CD8-positive, alpha-beta T cell (primary cell): ENCODE measurements at regions of chr1 and their contacts with region 1.

Region 1: GRCh38 chr1:2227346-2228153 is 569 bp upstream of the SKI start:
- DNase-seq: peak; percentile 88 to 97 (median 91)
- ATAC-seq: peak; percentile 70
- H3K4me3 ChIP-seq: peak overlapping the region in 1 of 2 experiments; percentile 24
- H3K4me3 Mint-ChIP-seq: peak overlapping the region; percentile 68
- H3K27ac ChIP-seq: peak overlapping the region in 1 of 2 experiments; percentile 66
- H3K27ac Mint-ChIP-seq: peak overlapping the region; percentile 74
- H3K4me1 ChIP-seq: peaks cover 24% of the 10 kb centered on the region
- H3K4me1 Mint-ChIP-seq: peaks cover 21% of the 10 kb centered on the region
- H3K27me3 ChIP-seq: no peaks in the 10 kb centered on the region
- H3K27me3 Mint-ChIP-seq: no peaks in the 10 kb centered on the region
- CTCF ChIP-seq: no peak

Region 2: DNA sequence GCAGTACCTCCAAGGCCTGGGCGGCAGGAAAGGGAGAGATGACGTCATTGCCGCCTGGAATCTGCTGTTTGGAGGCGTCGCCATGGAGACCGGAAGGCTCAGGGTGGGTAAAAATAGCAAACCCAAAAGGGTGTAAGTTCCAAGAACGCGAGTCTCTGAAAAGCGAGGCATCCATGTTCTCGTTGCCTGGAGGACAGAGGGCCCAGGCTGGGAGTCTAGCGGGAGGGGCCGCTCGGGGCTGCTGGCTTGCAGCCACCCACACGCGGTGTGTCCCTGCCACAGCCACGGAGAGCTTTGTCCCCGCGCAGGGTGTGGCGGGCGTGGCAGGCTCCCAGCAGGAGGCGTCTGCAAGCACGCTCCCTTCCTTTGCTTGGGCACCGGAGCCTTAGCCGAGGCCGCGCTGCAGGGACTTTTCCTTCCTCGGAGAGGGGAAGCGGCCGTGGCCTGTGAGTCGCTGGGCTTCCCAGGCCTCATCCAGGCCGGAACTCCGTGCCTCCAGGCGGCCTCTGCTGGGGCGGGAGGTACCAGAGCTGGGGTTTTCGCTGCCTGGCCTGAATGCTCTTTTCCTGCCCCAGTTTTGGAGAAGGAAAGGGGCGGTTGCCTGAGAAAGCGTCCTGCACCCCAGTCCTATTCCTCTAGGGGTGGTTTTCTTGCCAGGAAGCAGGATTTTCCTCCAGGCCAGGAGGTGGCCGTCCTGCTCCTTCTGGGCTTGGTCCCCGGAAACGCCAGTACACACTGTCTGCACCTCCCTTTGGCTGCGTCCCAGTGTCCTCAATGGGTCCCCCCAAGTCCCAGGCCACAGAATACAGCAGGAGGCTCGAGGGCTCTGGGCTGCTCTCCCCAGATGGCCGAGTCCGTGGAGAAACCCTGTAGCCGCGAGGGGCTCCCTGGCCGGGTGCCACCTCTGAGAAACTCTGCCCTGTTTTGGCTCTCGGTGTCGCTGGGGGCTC is 14.7 kb before region 1 on chr1:
- CTCF ChIA-PET with region 1: interaction called, 3 read pairs
- POLR2A ChIA-PET with region 1: interaction called, 4 read pairs
- intact Hi-C with region 1: loop called in 1 of 2 experiments (anchors 2 kb)
- DNase-seq: peak in 6 of 9 experiments; percentile 54 to 85 (median 70)
- ATAC-seq: peak; percentile 70
- H3K4me3 ChIP-seq: peak overlapping the region; percentile 28 to 43
- H3K4me3 Mint-ChIP-seq: peak overlapping the region; percentile 5
- H3K27ac ChIP-seq: peak overlapping the region in 1 of 2 experiments; percentile 20
- H3K27ac Mint-ChIP-seq: no peak overlapping the region
- H3K4me1 ChIP-seq: peaks cover 13% of the 10 kb centered on the region
- H3K4me1 Mint-ChIP-seq: peaks cover 4% of the 10 kb centered on the region
- H3K27me3 ChIP-seq: peaks cover 0 to 6% of the 10 kb centered on the region in 2 experiments
- H3K27me3 Mint-ChIP-seq: no peaks in the 10 kb centered on the region
- CTCF ChIP-seq: no peak

Region 3: DNA sequence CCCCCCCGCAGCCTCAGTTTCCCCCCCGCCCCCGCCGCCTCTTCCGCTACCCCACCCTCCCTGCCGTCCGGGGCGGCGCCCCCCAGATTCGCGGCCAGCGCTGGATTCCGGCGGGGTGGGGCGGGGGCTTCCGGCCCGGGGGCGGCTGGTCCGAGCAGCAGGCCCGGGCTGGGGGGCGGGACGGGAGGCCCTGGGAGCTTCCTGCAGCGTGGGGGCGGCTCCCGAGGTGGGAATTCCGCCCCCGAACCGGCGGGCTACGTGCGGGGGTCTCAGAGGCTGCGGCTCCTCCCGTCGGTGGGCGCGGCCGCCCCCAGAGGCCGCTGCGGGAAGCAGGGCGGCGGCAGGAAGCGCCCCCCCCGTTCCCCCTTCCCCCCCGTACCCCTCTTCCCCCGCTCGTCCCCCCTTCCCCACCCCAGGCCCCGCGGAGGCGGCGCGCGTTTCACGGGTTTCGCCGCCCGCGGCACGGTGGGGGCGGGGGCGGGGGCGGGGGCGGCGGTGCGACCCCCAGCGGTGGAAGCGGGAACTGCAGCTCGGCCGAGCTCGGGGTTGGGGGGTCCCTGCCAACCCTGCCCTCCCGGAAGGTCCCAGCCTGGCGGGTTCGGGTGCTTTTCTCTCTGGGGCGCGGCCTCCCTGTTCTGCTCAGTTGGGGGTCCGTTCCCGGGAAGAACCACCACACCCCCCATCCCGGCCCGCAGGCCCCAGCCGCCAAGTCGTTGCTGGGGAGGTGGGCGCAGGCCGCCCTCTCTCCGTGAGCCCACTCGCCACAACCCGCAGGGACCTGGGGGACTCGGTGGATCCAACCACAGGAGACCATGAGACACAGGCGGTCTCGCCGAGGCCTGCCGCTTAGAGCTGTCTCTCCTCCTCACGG is 87.5 kb after region 1 on chr1:
- CTCF ChIA-PET with region 1: interaction called, 8 read pairs
- POLR2A ChIA-PET with region 1: interaction called, 20 read pairs
- intact Hi-C with region 1: loop called (anchors 1 kb)
- DNase-seq: peak; percentile 52 to 89 (median 73)
- ATAC-seq: peak; percentile 50
- H3K4me3 ChIP-seq: peak overlapping the region; percentile 52 to 58
- H3K4me3 Mint-ChIP-seq: peak overlapping the region; percentile 64
- H3K27ac ChIP-seq: peak overlapping the region; percentile 70 to 82
- H3K27ac Mint-ChIP-seq: peak overlapping the region; percentile 79
- H3K4me1 ChIP-seq: peaks cover 76% of the 10 kb centered on the region
- H3K4me1 Mint-ChIP-seq: peaks cover 33% of the 10 kb centered on the region
- H3K27me3 ChIP-seq: no peaks in the 10 kb centered on the region
- H3K27me3 Mint-ChIP-seq: no peaks in the 10 kb centered on the region
- CTCF ChIP-seq: peak; percentile 97

Region 4: GRCh38 chr1:2368053-2368736 is 140.6 kb after region 1 on chr1:
- CTCF ChIA-PET with region 1: no interaction called
- POLR2A ChIA-PET with region 1: no interaction called
- intact Hi-C with region 1: no loop called
- DNase-seq: no peak
- ATAC-seq: no peak
- H3K4me3 ChIP-seq: no peak overlapping the region
- H3K4me3 Mint-ChIP-seq: no peak overlapping the region
- H3K27ac ChIP-seq: no peak overlapping the region
- H3K27ac Mint-ChIP-seq: no peak overlapping the region
- H3K4me1 ChIP-seq: no peaks in the 10 kb centered on the region
- H3K4me1 Mint-ChIP-seq: no peaks in the 10 kb centered on the region
- H3K27me3 ChIP-seq: no peaks in the 10 kb centered on the region
- H3K27me3 Mint-ChIP-seq: no peaks in the 10 kb centered on the region
- CTCF ChIP-seq: no peak